ENCODE measurements at regions of chr2 and their contacts with region 1.

Region 1: GRCh38 chr2:231900486-231900942 is 25.7 kb downstream of the NPPC start:
- DNase-seq: peak; percentile 10 to 53
- ATAC-seq: peak in 1 of 2 donors; percentile 75
- H3K4me3 ChIP-seq: no peak overlapping the region
- H3K27ac ChIP-seq: no peak overlapping the region
- H3K4me1 ChIP-seq: no peaks in the 10 kb centered on the region
- H3K27me3 ChIP-seq: no peaks in the 10 kb centered on the region
- CTCF ChIP-seq: peak; percentile 32 to 67 (median 58)
- POLR2A ChIP-seq: no peak

Region 2: DNA sequence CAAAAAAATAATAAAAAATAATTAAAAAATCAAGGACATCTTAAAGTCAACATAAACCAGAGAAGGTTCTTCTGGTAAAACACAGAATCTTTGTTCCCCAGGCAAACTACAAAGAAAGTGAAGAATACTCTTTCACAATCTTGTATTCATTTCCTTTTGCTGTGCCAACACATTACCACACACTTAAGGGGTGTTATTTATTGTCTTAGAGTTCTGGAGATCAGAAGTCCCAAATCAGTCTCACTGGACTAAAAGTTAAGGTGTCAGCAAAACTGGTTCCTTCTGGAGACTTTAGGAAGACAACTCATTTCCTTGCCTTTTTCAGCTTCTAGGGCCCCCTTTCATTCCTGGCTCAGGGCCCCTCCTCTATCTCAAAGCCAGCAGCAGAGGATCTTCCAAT is 1200.1 kb before region 1 on chr2:
- in situ Hi-C with region 1: no loop called
- intact Hi-C with region 1: no loop called
- DNase-seq: no peak
- ATAC-seq: peak; percentile 70 to 90
- H3K4me3 ChIP-seq: no peak overlapping the region
- H3K27ac ChIP-seq: peak overlapping the region in 1 of 4 donors; percentile 47
- H3K4me1 ChIP-seq: peaks cover 0 to 5% of the 10 kb centered on the region in 2 donors
- H3K27me3 ChIP-seq: no peaks in the 10 kb centered on the region
- CTCF ChIP-seq: no peak
- POLR2A ChIP-seq: no peak

Region 3: GRCh38 chr2:231321556-231322334 is 578.8 kb before region 1 on chr2:
- in situ Hi-C with region 1: no loop called
- intact Hi-C with region 1: no loop called
- DNase-seq: peak; percentile 40 to 43
- ATAC-seq: no peak
- H3K4me3 ChIP-seq: no peak overlapping the region
- H3K27ac ChIP-seq: no peak overlapping the region
- H3K4me1 ChIP-seq: no peaks in the 10 kb centered on the region
- H3K27me3 ChIP-seq: no peaks in the 10 kb centered on the region
- CTCF ChIP-seq: no peak
- POLR2A ChIP-seq: no peak

Region 4: GRCh38 chr2:232315049-232315922 is 414.8 kb after region 1 on chr2:
- in situ Hi-C with region 1: loop called in 2 of 4 experiments (anchors 10 to 25 kb)
- intact Hi-C with region 1: no loop called
- DNase-seq: peak; percentile 78 to 85
- ATAC-seq: peak; percentile 96 to 97
- H3K4me3 ChIP-seq: no peak overlapping the region
- H3K27ac ChIP-seq: peak overlapping the region; percentile 74 to 81 (median 79)
- H3K4me1 ChIP-seq: peaks cover 19 to 33% of the 10 kb centered on the region in 2 donors
- H3K27me3 ChIP-seq: no peaks in the 10 kb centered on the region
- CTCF ChIP-seq: peak; percentile 27 to 63 (median 43)
- POLR2A ChIP-seq: no peak

Region 5: GRCh38 chr2:232438951-232439757 is 538.6 kb after region 1 on chr2:
- in situ Hi-C with region 1: loop called (anchors 10 to 25 kb)
- intact Hi-C with region 1: no loop called
- DNase-seq: no peak
- ATAC-seq: peak in 1 of 2 donors; percentile 32
- H3K4me3 ChIP-seq: no peak overlapping the region
- H3K27ac ChIP-seq: no peak overlapping the region
- H3K4me1 ChIP-seq: peaks cover 3 to 5% of the 10 kb centered on the region in 2 donors
- H3K27me3 ChIP-seq: no peaks in the 10 kb centered on the region
- CTCF ChIP-seq: peak; percentile 31 to 56 (median 47)
- POLR2A ChIP-seq: no peak

Region 6: DNA sequence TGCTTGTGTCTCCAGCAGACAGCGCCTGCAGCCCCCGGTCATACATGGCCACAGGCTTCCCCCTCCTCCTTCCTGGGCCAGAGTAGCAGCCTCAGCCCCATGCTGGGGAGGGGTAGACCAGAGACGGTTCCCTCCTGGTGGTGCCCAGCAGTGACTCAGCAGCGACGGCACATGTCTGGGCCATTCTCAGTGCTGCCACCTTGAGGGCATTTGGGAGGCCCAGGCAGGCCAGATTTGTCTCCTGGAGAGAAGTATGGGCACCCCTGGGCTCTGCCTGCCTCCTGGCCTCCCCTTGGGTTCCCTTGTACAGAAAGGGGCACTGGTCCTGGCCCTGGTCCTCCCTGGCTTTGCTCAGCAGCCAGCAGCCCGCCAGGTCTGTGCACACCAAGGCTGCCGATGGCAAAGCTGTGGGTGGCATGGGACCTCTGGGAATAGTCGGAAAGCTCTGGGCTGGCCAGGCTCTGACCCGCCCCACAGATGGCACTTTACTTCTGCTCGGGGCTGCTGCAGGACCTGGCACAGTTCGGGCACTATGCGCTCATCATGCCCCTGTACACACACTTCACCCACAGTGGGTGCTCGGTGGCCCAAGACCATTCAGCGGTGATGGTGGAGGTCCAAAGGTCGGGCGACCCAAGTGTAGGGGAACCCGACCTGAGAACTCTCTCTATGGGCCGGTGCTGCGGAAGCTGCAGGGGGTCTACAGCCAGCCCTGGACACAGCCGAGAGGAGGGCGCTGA is 544.1 kb after region 1 on chr2:
- in situ Hi-C with region 1: loop called (anchors 10 to 25 kb)
- intact Hi-C with region 1: no loop called
- DNase-seq: peak in 1 of 2 donors; percentile 48
- ATAC-seq: peak in 1 of 2 donors; percentile 23
- H3K4me3 ChIP-seq: no peak overlapping the region
- H3K27ac ChIP-seq: peak overlapping the region; percentile 10 to 66 (median 36)
- H3K4me1 ChIP-seq: peaks cover 3 to 9% of the 10 kb centered on the region in 2 donors
- H3K27me3 ChIP-seq: no peaks in the 10 kb centered on the region
- CTCF ChIP-seq: peak in 4 of 5 experiments; percentile 19 to 56 (median 34)
- POLR2A ChIP-seq: no peak

Measured in gastrocnemius medialis (tissue), 4 donors.